Posterior vena cava (tissue), 2 donors: ENCODE measurements at regions of chr3 and their contacts with region 1.

Region 1: GRCh38 chr3:186849374-186849975 is 7.0 kb downstream of the ADIPOQ start:
- DNase-seq: no peak

Region 2: DNA sequence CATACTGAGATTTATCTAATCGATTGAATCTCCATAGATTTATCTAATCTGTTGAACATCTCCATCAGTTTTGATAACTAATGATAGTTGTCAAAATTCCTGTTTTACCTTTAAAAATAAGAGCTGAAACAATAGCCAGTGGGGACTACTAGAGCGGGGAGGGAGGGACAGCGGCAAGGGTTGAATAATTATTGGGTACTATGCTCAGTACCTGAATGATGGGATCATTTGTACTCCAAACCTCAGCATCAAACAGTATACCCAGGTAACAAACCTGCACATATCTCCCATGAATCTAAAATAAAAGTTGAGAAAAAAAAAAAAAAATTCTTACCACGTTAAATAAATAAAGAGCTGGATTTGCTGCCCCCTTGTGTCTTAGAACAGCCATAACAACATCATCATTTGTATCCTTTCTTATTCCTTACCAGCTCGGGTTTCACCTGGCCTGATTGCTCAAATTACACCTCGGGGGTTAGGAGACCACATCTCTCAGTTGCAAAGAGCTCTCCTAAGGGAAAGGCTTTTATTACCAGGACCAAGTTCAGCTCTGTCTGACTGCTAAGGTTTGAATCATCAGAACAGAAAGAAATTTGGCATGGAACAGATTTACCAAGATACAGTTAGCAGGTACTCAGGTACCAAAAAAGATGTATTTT is 315.5 kb after region 1 on chr3:
- intact Hi-C with region 1: loop called (anchors 10 kb)
- DNase-seq: no peak